ENCODE measurements at regions of chr10 and their contacts with region 1.

Region 1: GRCh38 chr10:89643431-89644331 is 1.4 kb downstream of the PANK1 start:
- DNase-seq: peak; percentile 79

Region 2: GRCh38 chr10:89633484-89633883 is 10.2 kb before region 1 on chr10:
- CTCF ChIA-PET with region 1: interaction called, 4 read pairs
- POLR2A ChIA-PET with region 1: interaction called, 12 read pairs
- DNase-seq: no peak

Region 3: DNA sequence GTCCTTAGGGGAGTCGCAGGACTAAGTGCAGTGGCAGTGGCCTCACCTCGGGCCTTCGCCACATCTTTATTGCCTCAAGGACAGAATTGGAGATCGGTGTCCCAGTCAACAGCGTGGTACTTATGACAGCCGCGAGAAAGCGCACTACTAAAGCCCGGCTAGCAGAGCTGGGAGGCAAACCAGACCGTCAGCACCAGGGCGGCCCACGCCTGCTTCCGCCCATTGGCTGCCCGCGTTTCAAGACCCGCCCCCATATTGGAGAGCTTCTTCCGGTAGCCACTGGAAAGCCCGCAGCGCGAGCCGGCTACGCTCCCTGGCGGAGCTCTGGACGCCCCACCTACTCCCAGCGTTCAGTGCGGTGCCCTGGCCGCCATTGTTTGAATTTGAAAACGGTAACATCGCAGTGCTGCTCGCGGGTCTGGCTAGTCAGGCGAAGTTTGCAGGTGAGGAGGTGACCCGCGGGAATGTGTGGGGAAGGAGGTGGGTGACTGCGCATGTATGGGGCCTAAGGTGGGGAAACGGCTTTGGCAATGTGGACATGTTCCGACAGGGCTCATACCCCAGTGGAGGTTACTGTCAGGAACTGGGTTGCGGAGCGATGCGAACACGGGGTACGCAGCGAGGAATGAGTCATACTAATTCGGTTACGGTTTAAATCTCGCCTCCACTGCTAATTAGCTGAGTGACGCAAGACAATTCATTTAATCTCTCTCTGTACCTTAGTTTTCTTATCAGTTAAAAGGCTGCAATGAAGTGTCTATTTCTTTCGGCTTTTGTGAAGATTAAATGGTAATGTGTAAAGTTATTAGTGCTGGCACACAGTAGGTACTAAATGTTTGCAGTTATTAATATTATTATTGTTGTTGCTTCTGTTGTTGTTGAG is 57.8 kb after region 1 on chr10 and contains the start of gene KIF20B:
- CTCF ChIA-PET with region 1: no interaction called
- POLR2A ChIA-PET with region 1: interaction called, 29 read pairs
- DNase-seq: peak; percentile 96

Measured in HEK293T (cell line).